ENCODE measurements at regions of chr9 and their contacts with region 1.

Region 1: DNA sequence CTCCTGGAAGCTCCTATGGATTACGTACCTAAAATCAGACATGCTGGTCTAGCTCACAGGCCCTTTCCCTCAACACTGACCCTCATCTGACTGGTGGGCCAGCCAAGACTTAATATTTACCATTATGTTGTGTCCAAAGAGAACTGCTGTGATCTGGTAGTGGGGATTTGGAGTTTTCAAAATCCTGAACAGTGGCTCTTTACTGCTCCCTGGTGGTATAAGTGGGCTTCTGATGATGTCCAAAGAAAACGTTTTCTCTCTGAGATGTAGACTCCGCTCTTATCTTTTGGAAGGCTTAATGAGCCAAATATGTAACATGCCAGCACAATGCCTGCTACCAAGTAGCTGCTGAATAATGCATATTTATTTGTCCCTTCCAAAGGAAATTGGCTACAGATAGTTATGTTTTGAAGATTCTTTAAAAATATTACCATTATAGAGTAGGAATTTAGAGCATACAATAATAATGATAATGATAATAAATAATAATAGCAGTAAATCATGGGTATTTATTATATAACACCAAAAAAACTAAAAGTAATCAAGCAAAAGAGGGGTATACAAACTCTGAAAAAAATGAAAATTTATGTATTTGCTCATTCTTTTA is 406.6 kb upstream of the TNC start:
- DNase-seq: no peak
- H3K4me3 ChIP-seq: no peak overlapping the region
- H3K27ac ChIP-seq: no peak overlapping the region
- H3K4me1 ChIP-seq: peaks cover 0 to 28% (median 16%) of the 10 kb centered on the region in 4 donors
- H3K27me3 ChIP-seq: no peaks in the 10 kb centered on the region
- CTCF ChIP-seq: peak; percentile 74 to 81 (median 77)
- EP300 ChIP-seq: no peak
- POLR2A ChIP-seq: no peak

Region 2: DNA sequence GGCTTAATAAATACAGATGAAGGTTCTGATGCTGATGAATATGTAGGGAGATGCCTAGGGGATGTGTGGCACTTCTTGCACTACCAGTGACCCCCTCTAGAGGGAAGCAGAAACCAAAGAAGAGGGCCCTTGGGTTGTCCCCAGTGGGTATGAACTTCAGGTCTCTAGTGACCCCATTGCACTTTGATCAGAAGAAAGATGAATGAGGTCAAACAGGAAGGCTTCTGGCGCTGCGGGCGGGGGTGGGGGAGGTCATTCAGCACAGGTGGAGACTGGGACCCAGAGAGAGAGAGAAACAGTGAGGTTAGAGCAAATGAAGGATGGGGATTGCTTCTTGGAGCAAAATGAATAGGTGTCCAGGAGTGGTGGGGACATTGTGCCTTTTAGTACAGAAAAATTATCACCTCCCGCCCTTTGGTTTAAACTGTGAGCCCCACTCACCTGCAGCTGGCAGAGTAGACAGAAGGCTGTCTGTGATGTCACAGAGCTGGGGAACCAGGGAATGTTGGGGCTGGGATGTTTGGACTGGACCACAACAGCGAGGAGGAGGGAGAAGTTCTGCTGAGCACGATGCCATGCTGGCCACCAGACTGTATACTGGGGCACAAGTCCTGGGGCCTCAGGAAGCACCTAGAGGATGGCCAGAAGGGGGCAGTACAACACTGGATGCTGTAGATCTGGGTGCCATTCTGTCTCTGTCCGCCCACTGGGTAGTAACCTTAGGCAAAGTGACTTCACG is 842.8 kb before region 1 on chr9 and contains the start of gene TEX48:
- intact Hi-C with region 1: loop called (anchors 5 kb)
- DNase-seq: no peak
- H3K4me3 ChIP-seq: no peak within 1 kb of the TSS
- H3K27ac ChIP-seq: no peak within 1 kb of the TSS
- H3K4me1 ChIP-seq: peaks cover 0 to 15% (median 7%) of the 10 kb centered on the region in 4 donors
- H3K27me3 ChIP-seq: no peaks in the 10 kb centered on the region
- CTCF ChIP-seq: peak; percentile 34 to 62 (median 47)
- EP300 ChIP-seq: no peak
- POLR2A ChIP-seq: no peak
- total RNA-seq, gene TEX48: not detected

Region 3: GRCh38 chr9:114738581-114739316 is 785.8 kb before region 1 on chr9:
- intact Hi-C with region 1: loop called (anchors 2 kb)
- DNase-seq: peak; percentile 95
- H3K4me3 ChIP-seq: no peak overlapping the region
- H3K27ac ChIP-seq: no peak overlapping the region
- H3K4me1 ChIP-seq: peaks cover 0 to 14% (median 9%) of the 10 kb centered on the region in 4 donors
- H3K27me3 ChIP-seq: no peaks in the 10 kb centered on the region
- CTCF ChIP-seq: peak; percentile 80 to 83 (median 82)
- EP300 ChIP-seq: no peak
- POLR2A ChIP-seq: no peak

Region 4: GRCh38 chr9:115117999-115118878 is 406.3 kb before region 1 on chr9 and contains the start of gene TNC:
- intact Hi-C with region 1: loop called (anchors 10 kb)
- DNase-seq: no peak
- H3K4me3 ChIP-seq: peak within 1 kb of the TSS; percentile 53 to 69 (median 59)
- H3K27ac ChIP-seq: peak within 1 kb of the TSS; percentile 90 to 92 (median 91)
- H3K4me1 ChIP-seq: peaks cover 12 to 61% (median 43%) of the 10 kb centered on the region in 4 donors
- H3K27me3 ChIP-seq: no peaks in the 10 kb centered on the region
- CTCF ChIP-seq: no peak
- EP300 ChIP-seq: no peak
- POLR2A ChIP-seq: peak; percentile 50
- total RNA-seq, gene TNC: 216 to 576 (median 478) TPM

Region 5: DNA sequence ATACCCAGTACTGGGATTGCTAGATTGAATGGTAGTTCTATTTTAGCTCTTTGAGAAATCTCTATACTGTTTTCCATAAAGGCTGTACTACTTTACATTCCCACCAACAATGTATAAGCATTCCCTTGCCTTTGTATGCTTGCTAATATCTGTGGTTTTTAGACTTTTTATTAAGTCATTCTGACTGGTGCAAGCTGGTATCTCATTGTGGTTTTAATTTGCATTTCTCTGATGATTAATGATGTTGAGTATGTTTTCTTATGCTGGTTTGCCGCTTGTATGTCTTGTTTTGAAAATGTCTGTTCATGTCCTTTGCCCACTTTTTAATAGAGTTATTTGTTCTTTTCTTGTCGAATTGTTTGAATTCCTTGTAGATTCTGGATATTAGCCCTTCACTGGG is 116.3 kb after region 1 on chr9:
- intact Hi-C with region 1: no loop called
- DNase-seq: no peak
- H3K4me3 ChIP-seq: no peak overlapping the region
- H3K27ac ChIP-seq: no peak overlapping the region
- H3K4me1 ChIP-seq: no peaks in the 10 kb centered on the region
- H3K27me3 ChIP-seq: no peaks in the 10 kb centered on the region
- CTCF ChIP-seq: no peak
- EP300 ChIP-seq: no peak
- POLR2A ChIP-seq: no peak

Measured in esophagus muscularis mucosa (tissue), 4 donors.